Posterior cingulate gyrus (tissue), 11 donors: ENCODE measurements at regions of chr6 and their contacts with region 1.

Region 1: DNA sequence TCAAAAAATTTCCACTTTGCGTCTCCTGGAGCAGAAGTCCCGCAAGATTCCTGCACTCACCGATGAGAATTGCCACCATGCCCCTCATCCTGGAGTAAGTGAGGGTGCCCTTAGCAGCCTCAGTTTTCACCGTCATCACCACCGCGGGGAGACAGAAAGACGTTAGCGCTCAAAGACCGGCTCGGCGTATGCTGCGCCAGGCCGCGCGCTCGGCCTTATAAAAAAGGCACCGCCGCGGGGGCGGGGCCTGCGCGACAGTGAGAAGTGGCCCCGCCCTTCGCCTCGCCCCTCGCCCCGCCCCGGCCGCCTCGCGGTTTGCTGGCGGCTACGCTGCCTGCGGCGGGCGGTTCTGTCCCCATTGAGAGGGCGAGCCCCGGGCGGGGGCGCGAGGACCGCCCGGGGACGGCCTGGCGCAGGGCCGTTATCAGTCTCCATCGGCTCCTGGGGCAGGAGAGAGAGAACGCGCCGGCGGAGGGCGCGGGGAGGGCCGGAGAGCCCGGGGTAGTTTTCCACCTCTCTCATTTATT is 122.3 kb upstream of the SLC2A12 start:
- DNase-seq: peak; percentile 93 to 100 (median 96)

Region 2: GRCh38 chr6:133587546-133588160 is 587.1 kb before region 1 on chr6:
- intact Hi-C with region 1: no loop called
- DNase-seq: no peak

Region 3: GRCh38 chr6:134253681-134254080 is 78.9 kb after region 1 on chr6:
- intact Hi-C with region 1: loop called (anchors 5 kb)
- DNase-seq: peak in 3 of 10 donors; percentile 10 to 73 (median 40)

Region 4: DNA sequence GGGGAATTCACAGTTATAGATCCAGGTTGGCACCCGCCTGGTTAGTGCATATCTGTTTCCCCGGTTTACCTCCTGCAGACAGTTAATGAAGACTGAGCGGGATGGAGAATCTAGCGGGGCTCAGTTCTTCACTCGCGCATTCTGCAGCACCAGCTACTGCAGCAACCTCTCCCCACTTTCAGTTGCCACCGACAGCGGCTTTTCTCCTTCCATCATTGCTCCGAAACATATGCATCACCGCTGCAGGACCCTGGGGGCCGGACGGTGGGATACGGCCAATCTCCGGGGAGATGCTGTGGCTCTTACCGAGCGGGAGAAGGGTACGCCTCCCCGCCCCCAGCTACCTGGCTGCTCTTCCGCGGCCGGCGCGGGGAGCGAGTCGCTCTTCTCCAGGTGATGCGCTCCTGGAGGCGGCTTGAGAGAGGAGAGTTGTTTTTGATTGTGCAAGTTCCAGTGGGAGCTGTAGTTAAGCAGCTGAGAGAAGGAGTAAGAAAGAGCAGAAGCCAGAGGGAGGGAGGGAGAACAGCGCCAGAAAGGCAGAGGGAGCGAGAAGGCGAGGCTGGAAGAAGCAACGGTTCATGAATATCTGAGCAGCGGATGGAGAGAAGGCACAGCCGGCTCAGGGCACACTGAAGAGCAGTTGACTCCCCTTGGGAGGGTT is 142.9 kb after region 1 on chr6 and contains the start of gene SGK1:
- intact Hi-C with region 1: loop called (anchors 2 kb)
- DNase-seq: peak; percentile 38 to 91 (median 54)

Region 5: GRCh38 chr6:134436281-134436815 is 261.6 kb after region 1 on chr6:
- intact Hi-C with region 1: loop called (anchors 5 kb)
- DNase-seq: peak in 9 of 10 donors; percentile 28 to 93 (median 65)

Region 6: GRCh38 chr6:134564705-134565104 is 390.0 kb after region 1 on chr6:
- intact Hi-C with region 1: loop called (anchors 10 kb)
- DNase-seq: peak in 9 of 10 donors; percentile 19 to 95 (median 67)

Region 7: GRCh38 chr6:134640975-134641429 is 466.3 kb after region 1 on chr6:
- intact Hi-C with region 1: loop called (anchors 2 kb)
- DNase-seq: peak; percentile 51 to 95 (median 76)

Region 8: DNA sequence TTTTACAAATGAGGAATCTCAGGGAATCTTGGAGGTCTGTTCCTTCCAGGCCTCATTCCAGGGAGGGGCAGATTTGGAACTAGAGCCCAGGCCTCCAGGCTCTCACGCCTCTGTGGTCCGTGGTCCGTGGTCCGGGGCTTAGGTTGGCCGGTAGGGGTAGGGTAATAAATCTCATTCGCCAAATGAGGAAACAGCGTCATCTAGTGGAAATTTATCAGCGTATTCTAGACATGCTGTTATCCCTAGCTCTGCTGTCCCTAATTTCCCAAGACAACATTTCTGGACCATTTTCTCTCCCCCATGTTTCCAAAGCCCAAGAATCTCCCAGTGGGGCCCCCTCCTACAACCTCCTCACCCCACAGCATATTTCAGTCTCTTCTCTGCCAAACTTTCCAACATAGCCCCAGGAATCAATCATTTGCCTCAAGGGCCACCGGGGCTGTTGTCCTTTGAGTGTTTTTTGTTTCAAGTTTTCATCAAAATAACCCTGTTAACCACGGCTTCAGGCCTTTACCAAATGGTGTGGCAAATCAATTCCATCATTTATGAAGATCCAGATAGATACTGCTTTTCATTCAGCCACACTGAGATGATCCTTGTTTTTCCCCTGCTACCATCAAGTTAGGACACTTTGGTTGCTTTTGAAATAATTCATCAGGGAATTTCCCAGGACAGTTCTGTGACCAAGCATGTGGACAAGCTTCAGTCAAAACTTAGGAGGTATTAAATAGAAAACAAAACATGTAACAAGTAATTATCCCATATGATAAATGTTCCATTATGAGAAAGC is 648.4 kb after region 1 on chr6:
- intact Hi-C with region 1: loop called (anchors 1 kb)
- DNase-seq: peak in 6 of 10 donors; percentile 19 to 81 (median 40)